ENCODE measurements at regions of chr5 and their contacts with region 1.

Region 1: DNA sequence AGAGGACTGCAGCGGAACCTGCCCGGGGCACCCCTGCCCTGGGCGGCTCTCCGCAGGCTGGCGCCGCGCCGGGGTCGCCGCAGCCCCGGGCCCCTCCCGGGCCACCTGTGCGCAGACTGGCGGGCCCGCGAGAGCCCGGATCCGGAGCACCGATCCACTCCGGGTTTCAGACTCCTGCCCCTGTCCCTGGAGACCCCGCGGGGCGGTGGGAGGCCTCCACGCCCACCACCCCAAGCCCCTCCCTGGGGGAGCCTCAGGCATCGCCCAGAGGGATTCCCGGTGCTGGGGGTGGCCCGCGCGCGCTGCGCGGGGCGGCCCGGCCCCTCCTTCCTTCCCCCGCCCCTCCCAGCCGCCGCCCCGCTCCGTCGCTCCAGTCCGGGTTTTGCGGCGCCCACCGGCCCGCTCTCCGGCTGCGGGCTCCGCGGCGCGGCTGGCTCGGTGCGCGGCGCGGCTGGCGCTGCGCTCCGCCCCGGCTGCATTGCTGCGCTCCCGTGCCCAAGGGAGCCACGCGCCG is at the start of gene UNC5A:
- DNase-seq: peak; percentile 64
- H3K4me3 Mint-ChIP-seq: peak within 1 kb of the TSS; percentile 66
- H3K27ac Mint-ChIP-seq: no peak within 1 kb of the TSS
- H3K4me1 Mint-ChIP-seq: peaks cover 12% of the 10 kb centered on the region
- H3K27me3 Mint-ChIP-seq: peaks cover 53% of the 10 kb centered on the region
- total RNA-seq, gene UNC5A: not detected

Region 2: DNA sequence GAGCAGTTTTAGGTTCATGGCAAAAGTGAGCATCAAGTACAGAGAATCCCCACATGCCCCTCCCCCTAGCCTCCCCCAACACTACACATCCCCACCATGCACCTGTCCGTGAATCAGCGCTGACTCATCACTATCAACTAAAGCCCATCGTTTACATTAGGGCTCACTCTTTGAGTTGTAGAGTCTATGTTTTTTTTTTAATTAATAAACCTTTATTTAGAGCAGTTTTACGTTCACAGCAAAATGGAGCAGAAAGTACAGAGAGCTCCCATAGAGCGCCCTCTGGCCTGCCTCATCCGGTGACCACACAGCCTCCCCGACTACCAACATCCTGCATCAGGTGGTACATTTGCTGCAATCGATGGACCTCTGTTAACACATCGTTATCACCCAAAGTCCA is 47.7 kb before region 1 on chr5:
- CTCF ChIA-PET with region 1: no interaction called
- POLR2A ChIA-PET with region 1: no interaction called
- intact Hi-C with region 1: no loop called
- DNase-seq: no peak
- H3K4me3 Mint-ChIP-seq: no peak overlapping the region
- H3K27ac Mint-ChIP-seq: no peak overlapping the region
- H3K4me1 Mint-ChIP-seq: peaks cover 4% of the 10 kb centered on the region
- H3K27me3 Mint-ChIP-seq: peaks cover 45% of the 10 kb centered on the region

Region 3: GRCh38 chr5:176959051-176959450 is 148.9 kb after region 1 on chr5:
- CTCF ChIA-PET with region 1: interaction called, 3 read pairs
- POLR2A ChIA-PET with region 1: no interaction called
- intact Hi-C with region 1: loop called (anchors 5 kb)
- DNase-seq: no peak
- H3K4me3 Mint-ChIP-seq: no peak overlapping the region
- H3K27ac Mint-ChIP-seq: no peak overlapping the region
- H3K4me1 Mint-ChIP-seq: no peaks in the 10 kb centered on the region
- H3K27me3 Mint-ChIP-seq: no peaks in the 10 kb centered on the region

Measured in activated CD4-positive, alpha-beta memory T cell treated with anti-CD3 and anti-CD28 coated beads for 36 hours (primary cell).